GM12878 (cell line): ENCODE measurements at regions of chr1 and their contacts with region 1.

Region 1: DNA sequence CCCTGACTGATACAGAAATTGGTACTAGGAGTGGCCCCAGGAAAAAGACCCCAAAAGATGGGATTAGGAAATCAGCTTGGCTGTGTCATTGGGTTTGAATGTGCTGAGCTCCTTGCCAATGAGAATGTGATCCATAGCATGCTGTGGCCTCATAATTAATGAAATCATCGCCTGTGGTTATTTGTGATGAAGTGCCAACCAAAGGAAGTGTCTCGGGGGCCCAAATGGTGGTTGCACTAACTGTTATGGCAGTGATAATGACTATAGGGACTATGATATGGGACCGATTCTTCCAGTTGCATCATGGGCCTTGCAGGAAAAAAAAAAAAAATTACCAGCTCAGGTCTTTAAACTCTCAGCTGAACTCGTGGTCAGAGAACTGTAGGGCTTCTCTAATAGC is 15.4 kb upstream of the ZDHHC18 start:
- DNase-seq: no peak
- ATAC-seq: 0 out of 3 replicates have a peak, but pooled peaks have one; percentile 20
- H3K4me3 ChIP-seq: no peak overlapping the region
- H3K27ac ChIP-seq: no peak overlapping the region
- H3K4me1 ChIP-seq: no peaks in the 10 kb centered on the region
- H3K27me3 ChIP-seq: no peaks in the 10 kb centered on the region
- CTCF ChIP-seq: no peak
- EP300 ChIP-seq: no peak
- POLR2A ChIP-seq: no peak
- RAD21 ChIP-seq: no peak

Region 2: DNA sequence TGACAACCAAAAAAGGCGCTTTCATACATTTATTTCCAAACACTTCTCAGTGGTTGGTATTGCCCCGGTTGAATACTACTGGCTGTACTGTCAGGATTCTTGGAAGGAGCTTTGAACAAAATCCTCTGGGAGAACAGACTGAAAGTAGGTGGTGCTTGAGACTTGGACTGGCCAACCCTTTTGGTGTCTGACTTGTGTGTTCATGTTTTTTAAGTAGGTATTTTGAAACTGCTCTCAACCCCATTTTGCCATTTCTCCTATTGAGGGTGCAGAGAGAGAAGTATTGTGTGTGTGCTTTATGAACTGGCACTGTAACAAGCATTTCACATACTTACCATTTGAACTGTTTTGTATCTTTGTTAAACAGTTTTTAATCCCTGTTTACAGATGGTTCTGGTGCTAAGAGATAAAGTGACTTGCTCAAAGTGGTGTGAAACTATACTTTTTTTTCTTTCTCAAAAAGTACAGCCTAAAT is 94.0 kb before region 1 on chr1:
- CTCF ChIA-PET with region 1: no interaction called
- POLR2A ChIA-PET with region 1: no interaction called
- RAD21 ChIA-PET with region 1: no interaction called
- SMC1A ChIA-PET with region 1: no interaction called
- in situ Hi-C with region 1: no loop called
- intact Hi-C with region 1: no loop called
- DNase-seq: no peak
- ATAC-seq: no peak
- H3K4me3 ChIP-seq: no peak overlapping the region
- H3K27ac ChIP-seq: peak overlapping the region; percentile 33
- H3K4me1 ChIP-seq: peaks cover 19% of the 10 kb centered on the region
- H3K27me3 ChIP-seq: no peaks in the 10 kb centered on the region
- CTCF ChIP-seq: no peak
- EP300 ChIP-seq: no peak
- POLR2A ChIP-seq: no peak
- RAD21 ChIP-seq: no peak

Region 3: DNA sequence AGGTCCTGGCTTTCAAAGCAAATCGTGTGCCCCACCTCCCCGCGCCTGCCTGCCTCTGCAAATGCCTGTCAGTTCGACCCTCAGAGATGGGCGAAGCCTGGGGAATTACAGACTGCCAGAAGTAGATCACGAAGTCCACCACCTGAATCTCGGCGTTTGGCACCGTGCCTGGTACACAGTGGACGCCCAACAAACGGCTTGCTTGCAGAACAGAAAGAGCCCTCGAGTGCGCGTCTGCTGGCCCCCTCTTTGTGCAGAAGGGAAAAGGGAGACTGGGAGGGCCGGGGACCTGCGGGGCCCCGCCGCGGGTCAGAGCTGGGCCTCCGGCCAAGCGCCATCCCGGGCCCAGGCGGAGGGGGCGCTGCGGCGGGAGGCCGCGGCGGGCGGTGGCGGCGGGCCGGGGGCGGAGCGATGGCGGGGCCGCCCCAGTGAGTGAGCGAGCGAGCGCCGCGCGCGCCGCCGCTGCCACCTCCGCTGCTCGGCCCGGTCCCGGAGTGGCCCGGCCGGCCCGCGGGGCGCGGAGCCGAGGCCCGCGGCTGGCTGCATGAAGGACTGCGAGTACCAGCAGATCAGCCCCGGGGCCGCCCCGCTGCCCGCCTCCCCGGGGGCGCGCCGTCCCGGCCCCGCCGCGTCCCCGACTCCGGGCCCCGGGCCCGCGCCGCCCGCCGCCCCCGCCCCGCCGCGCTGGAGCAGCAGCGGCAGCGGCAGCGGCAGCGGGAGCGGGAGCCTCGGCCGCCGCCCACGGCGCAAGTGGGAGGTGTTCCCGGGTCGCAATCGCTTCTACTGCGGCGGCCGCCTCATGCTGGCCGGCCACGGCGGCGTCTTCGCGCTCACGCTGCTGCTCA is 15.4 kb after region 1 on chr1 and contains the start of gene ZDHHC18:
- CTCF ChIA-PET with region 1: interaction called, 117 read pairs
- POLR2A ChIA-PET with region 1: interaction called, 6 read pairs
- RAD21 ChIA-PET with region 1: interaction called, 43 read pairs
- SMC1A ChIA-PET with region 1: interaction called, 38 read pairs
- in situ Hi-C with region 1: no loop called
- intact Hi-C with region 1: no loop called
- DNase-seq: no peak
- ATAC-seq: peak; percentile 78
- H3K4me3 ChIP-seq: peak within 1 kb of the TSS; percentile 86
- H3K27ac ChIP-seq: peak within 1 kb of the TSS; percentile 81
- H3K4me1 ChIP-seq: peaks cover 18% of the 10 kb centered on the region
- H3K27me3 ChIP-seq: no peaks in the 10 kb centered on the region
- CTCF ChIP-seq: peak; percentile 31 to 64 (median 54); a peak in 5 of 6 replicates
- EP300 ChIP-seq: no peak
- POLR2A ChIP-seq: peak; percentile 70
- RAD21 ChIP-seq: peak; percentile 18; the same call in 1 of the 2 replicates
- polyA plus RNA-seq, gene ZDHHC18: 0.40 to 1.2 TPM

Region 4: DNA sequence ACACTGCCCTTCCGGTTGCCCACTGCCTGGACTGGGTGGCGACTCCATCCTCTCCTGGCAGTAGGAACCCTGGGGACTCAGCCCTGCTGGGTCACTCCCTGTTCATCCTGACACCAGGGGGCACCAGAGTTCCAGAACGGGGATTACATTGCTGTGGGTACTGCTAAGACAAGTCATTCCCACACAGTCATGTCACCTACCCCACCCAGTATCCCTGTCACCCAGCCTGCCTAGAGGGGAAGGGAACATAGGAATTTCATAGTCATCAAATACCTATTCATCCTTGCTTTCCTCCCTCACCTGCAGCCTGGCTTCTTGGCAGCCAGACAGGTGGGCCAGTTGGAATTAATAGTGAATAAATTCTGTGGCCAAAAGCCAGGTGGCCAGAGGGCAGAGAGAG is 42.1 kb after region 1 on chr1:
- CTCF ChIA-PET with region 1: interaction called, 25 read pairs
- POLR2A ChIA-PET with region 1: interaction called, 3 read pairs
- RAD21 ChIA-PET with region 1: interaction called, 6 read pairs
- SMC1A ChIA-PET with region 1: interaction called, 8 read pairs
- in situ Hi-C with region 1: no loop called
- intact Hi-C with region 1: no loop called
- DNase-seq: no peak
- ATAC-seq: peak; percentile 98
- H3K4me3 ChIP-seq: no peak overlapping the region
- H3K27ac ChIP-seq: no peak overlapping the region
- H3K4me1 ChIP-seq: no peaks in the 10 kb centered on the region
- H3K27me3 ChIP-seq: no peaks in the 10 kb centered on the region
- CTCF ChIP-seq: peak; percentile 77 to 83 (median 82)
- EP300 ChIP-seq: no peak
- POLR2A ChIP-seq: 0 out of 2 replicates have a peak, but pooled peaks have one; percentile 24
- RAD21 ChIP-seq: peak; percentile 75

Region 5: DNA sequence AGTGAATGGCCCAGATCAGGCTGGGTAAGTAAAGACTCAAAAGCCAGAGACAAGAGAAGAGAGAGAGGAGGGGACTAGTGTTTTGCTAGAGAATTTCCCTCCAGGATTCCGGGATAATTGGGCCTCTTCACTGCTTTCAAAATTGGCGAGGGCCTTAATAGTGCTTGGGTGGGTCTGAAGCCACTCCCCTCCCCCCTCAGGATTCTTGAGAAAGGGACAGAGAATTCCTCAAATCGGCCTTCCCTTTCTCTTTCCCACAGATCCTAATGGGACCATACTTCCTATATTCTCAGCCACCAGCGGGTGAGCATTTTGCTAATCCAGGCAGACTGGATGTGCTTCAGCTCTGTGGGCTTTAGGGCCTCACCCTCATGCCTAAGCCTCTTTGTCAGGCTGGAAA is 63.8 kb after region 1 on chr1:
- CTCF ChIA-PET with region 1: interaction called, 36 read pairs
- POLR2A ChIA-PET with region 1: no interaction called
- RAD21 ChIA-PET with region 1: interaction called, 7 read pairs
- SMC1A ChIA-PET with region 1: interaction called, 22 read pairs
- in situ Hi-C with region 1: loop called (anchors 5 kb)
- intact Hi-C with region 1: loop called (anchors 1 kb)
- DNase-seq: no peak
- ATAC-seq: no peak
- H3K4me3 ChIP-seq: no peak overlapping the region
- H3K27ac ChIP-seq: no peak overlapping the region
- H3K4me1 ChIP-seq: no peaks in the 10 kb centered on the region
- H3K27me3 ChIP-seq: no peaks in the 10 kb centered on the region
- CTCF ChIP-seq: no peak
- EP300 ChIP-seq: no peak
- POLR2A ChIP-seq: no peak
- RAD21 ChIP-seq: no peak

Region 6: GRCh38 chr1:26889551-26890466 is 78.8 kb after region 1 on chr1 and contains the start of gene GPN2:
- CTCF ChIA-PET with region 1: interaction called, 31 read pairs
- POLR2A ChIA-PET with region 1: interaction called, 4 read pairs
- RAD21 ChIA-PET with region 1: interaction called, 3 read pairs
- SMC1A ChIA-PET with region 1: interaction called, 11 read pairs
- in situ Hi-C with region 1: no loop called
- intact Hi-C with region 1: no loop called
- DNase-seq: peak; percentile 46
- ATAC-seq: peak; percentile 98
- H3K4me3 ChIP-seq: peak within 1 kb of the TSS; percentile 96
- H3K27ac ChIP-seq: peak within 1 kb of the TSS; percentile 82
- H3K4me1 ChIP-seq: peaks cover 9% of the 10 kb centered on the region
- H3K27me3 ChIP-seq: no peaks in the 10 kb centered on the region
- CTCF ChIP-seq: no peak
- EP300 ChIP-seq: no peak; a peak in 1 of 4 replicates
- POLR2A ChIP-seq: peak; percentile 94
- RAD21 ChIP-seq: no peak
- polyA plus RNA-seq, gene GPN2: 8.3 to 17.4 TPM

Region 7: GRCh38 chr1:26959722-26960615 is 148.9 kb after region 1 on chr1 and contains the start of gene KDF1:
- CTCF ChIA-PET with region 1: no interaction called
- POLR2A ChIA-PET with region 1: no interaction called
- RAD21 ChIA-PET with region 1: no interaction called
- SMC1A ChIA-PET with region 1: no interaction called
- in situ Hi-C with region 1: no loop called
- intact Hi-C with region 1: no loop called
- DNase-seq: no peak
- ATAC-seq: peak; percentile 46; the same call in 2 of the 3 replicates
- H3K4me3 ChIP-seq: peak within 1 kb of the TSS; percentile 50; the same call in 1 of the 2 replicates
- H3K27ac ChIP-seq: no peak within 1 kb of the TSS
- H3K4me1 ChIP-seq: no peaks in the 10 kb centered on the region
- H3K27me3 ChIP-seq: peaks cover 6 to 7% of the 10 kb centered on the region in 2 experiments
- CTCF ChIP-seq: peak in 2 of 3 experiments; percentile 2 to 16; a peak in 1 of 6 replicates
- EP300 ChIP-seq: no peak
- POLR2A ChIP-seq: no peak
- RAD21 ChIP-seq: no peak
- polyA plus RNA-seq, gene KDF1: not detected